Endothelial cell of umbilical vein (primary cell): ENCODE measurements at regions of chr17 and their contacts with region 1.

Region 1: DNA sequence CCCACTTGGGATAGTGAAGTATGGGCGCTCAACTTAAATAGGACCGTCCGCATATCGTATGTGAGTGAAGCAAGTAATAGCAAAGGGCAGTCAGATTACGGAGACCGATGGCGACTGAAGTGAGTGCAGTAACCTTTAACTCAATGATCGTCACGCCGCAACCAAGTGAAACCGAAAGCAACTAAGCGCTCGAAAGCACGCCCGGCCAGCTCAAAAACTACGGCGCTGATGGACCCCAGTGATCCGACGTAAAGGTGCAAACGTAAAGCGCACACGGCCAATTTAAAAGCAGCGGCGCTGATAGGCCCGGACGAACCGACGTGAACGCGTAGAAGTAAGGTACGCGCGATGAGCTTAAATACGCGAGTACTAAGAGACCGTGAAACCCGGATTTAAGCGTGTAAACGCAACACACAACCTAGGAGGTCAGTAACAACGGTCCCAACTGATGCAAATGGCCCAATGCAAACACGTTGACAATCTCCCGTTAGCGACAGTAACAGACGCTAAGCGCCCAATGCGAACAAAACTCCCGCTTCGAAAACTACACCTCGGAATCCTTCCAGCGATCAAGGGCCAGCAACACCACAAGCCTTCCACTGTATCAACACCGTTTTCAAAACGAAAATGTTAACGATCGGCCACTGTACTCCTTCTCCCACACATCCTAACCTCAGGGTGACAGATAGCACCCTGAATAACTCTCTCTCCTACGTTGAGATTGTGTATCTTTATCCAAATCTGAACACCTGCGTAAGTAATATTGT is 37.9 kb upstream of the ARL4D start:
- DNase-seq: peak; percentile 97
- H3K4me3 ChIP-seq: peak overlapping the region in 2 of 3 experiments; percentile 40 to 86
- H3K27ac ChIP-seq: peak overlapping the region; percentile 99
- H3K4me1 ChIP-seq: peaks cover 10% of the 10 kb centered on the region
- H3K27me3 ChIP-seq: no peaks in the 10 kb centered on the region
- CTCF ChIP-seq: no peak
- POLR2A ChIP-seq: peak; percentile 100

Region 2: DNA sequence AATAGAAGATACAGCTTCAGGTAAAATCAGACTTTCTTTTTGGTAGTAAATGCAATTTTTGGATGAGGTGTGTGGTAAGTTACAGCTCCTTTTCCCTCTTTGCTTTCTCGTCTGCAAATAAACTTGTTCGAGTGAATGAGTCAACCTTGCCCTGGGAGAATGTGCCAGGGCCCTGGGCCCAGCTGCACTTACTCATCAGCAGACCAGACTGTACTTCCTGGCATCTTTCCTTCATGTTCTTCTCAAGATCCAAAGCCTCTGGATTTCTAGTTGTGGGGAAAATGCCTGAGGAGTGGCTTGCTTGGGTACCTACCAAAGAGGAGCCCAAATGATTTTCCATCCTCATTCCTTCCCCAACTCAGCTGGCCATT is 465.8 kb before region 1 on chr17:
- CTCF ChIA-PET with region 1: no interaction called
- POLR2A ChIA-PET with region 1: no interaction called
- dilution Hi-C with region 1: no loop called
- intact Hi-C with region 1: no loop called
- DNase-seq: peak; percentile 88
- H3K4me3 ChIP-seq: no peak overlapping the region
- H3K27ac ChIP-seq: peak overlapping the region; percentile 81
- H3K4me1 ChIP-seq: peaks cover 25% of the 10 kb centered on the region
- H3K27me3 ChIP-seq: no peaks in the 10 kb centered on the region
- CTCF ChIP-seq: no peak
- POLR2A ChIP-seq: no peak

Region 3: DNA sequence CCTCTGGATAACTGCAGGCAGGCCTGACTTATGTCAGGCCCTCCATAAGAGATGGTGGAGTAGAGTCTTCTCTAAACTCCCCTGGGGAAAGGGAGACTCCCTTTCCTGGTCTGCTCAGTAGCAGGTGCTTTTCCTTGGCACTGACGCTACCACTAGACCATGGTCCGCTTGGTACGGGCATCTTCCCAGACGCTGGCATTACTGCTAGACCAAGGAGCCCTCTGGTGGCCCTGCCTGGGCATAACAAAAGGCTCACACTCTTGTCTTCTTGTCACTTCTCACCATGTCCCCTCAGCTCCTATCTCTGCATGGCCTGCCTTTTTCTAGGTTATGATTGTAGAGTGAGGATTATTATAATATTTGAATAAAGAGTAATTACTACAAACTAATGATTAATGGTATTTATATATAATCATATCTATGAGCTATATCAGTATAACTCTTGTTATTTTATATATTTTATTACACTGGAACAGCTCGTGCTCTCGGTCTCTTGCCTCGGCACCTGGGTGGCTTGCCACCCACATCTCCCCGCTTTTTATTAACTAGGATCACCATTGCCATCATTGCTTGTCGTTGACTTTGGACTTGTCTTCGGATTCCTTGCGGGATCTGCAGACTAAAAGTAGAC is 21.9 kb before region 1 on chr17:
- CTCF ChIA-PET with region 1: interaction called, 19 read pairs
- POLR2A ChIA-PET with region 1: interaction called, 8 read pairs
- dilution Hi-C with region 1: no loop called
- intact Hi-C with region 1: no loop called
- DNase-seq: peak; percentile 64
- H3K4me3 ChIP-seq: no peak overlapping the region
- H3K27ac ChIP-seq: no peak overlapping the region
- H3K4me1 ChIP-seq: peaks cover 6% of the 10 kb centered on the region
- H3K27me3 ChIP-seq: peaks cover 0 to 7% of the 10 kb centered on the region in 2 experiments
- CTCF ChIP-seq: peak; percentile 58 to 84
- POLR2A ChIP-seq: no peak

Region 4: GRCh38 chr17:43388359-43389045 is 27.6 kb after region 1 on chr17:
- CTCF ChIA-PET with region 1: interaction called, 13 read pairs
- POLR2A ChIA-PET with region 1: interaction called, 47 read pairs
- dilution Hi-C with region 1: no loop called
- intact Hi-C with region 1: no loop called
- DNase-seq: peak; percentile 94
- H3K4me3 ChIP-seq: peak overlapping the region; percentile 26 to 55 (median 47)
- H3K27ac ChIP-seq: peak overlapping the region; percentile 65
- H3K4me1 ChIP-seq: peaks cover 4% of the 10 kb centered on the region
- H3K27me3 ChIP-seq: peaks cover 2 to 6% of the 10 kb centered on the region in 2 experiments
- CTCF ChIP-seq: no peak
- POLR2A ChIP-seq: peak; percentile 84

Region 5: DNA sequence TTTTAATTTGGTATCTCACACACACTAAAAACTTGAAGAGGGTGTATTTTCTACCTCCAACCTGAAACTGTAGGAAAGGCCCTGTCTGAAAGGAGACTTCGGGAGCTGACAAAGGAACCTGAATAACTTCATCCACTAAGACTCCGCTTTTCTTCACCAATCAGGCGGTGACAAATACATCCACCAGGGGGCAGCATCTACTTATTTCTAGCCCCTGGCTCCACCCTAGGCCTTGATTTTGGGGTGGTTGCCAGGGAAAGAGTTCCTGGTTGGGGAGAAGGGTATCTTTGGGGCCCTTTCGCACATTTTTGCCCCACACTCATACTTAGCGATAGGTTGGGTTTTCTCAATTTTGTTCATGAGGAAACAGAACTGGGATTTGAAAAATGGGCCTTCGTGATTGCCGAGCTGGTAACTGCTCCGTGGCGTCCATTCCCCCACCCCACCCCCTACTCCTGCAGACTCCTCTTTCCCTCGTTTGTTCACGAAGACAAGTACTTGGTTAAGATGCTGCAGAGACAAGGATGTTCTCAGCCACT is 33.1 kb after region 1 on chr17:
- CTCF ChIA-PET with region 1: interaction called, 13 read pairs
- POLR2A ChIA-PET with region 1: interaction called, 9 read pairs
- dilution Hi-C with region 1: no loop called
- intact Hi-C with region 1: no loop called
- DNase-seq: peak; percentile 80
- H3K4me3 ChIP-seq: no peak overlapping the region
- H3K27ac ChIP-seq: no peak overlapping the region
- H3K4me1 ChIP-seq: peaks cover 8% of the 10 kb centered on the region
- H3K27me3 ChIP-seq: no peaks in the 10 kb centered on the region
- CTCF ChIP-seq: peak; percentile 80 to 85
- POLR2A ChIP-seq: no peak